GM12878 (cell line): ENCODE measurements at regions of chr9 and their contacts with region 1.

Region 1: DNA sequence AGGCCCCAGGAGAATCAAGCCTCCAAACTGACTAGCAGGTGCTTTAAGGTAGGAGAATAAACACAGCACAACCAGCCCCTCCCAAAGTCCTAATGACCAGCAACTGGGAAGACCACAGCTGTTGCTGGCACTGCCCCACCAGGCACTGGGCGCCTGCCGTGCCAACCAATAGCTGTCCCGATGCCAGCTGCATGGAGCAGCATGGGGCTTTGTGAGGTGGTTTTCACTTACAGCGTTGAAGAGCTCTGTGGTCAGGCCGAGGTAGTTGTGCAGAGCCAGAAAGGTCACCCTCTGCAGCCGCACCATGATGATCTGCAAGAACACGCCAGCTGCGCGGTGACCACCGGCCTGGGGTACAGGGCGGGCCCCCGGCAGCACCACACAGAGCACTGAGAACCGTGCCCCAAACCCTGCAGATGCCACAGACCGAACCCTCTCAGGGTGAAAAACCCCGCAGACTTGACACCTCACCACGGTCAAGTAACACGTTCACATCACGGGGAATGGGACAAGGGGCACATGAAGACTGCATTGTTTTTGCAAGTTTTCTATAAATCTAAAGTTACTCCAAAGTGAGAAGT is 28.7 kb downstream of the PNPLA7 start:
- DNase-seq: no peak
- ATAC-seq: no peak
- H3K4me3 ChIP-seq: no peak overlapping the region
- H3K27ac ChIP-seq: no peak overlapping the region
- H3K4me1 ChIP-seq: no peaks in the 10 kb centered on the region
- H3K27me3 ChIP-seq: no peaks in the 10 kb centered on the region
- CTCF ChIP-seq: no peak
- EP300 ChIP-seq: no peak
- POLR2A ChIP-seq: no peak
- RAD21 ChIP-seq: no peak

Region 2: DNA sequence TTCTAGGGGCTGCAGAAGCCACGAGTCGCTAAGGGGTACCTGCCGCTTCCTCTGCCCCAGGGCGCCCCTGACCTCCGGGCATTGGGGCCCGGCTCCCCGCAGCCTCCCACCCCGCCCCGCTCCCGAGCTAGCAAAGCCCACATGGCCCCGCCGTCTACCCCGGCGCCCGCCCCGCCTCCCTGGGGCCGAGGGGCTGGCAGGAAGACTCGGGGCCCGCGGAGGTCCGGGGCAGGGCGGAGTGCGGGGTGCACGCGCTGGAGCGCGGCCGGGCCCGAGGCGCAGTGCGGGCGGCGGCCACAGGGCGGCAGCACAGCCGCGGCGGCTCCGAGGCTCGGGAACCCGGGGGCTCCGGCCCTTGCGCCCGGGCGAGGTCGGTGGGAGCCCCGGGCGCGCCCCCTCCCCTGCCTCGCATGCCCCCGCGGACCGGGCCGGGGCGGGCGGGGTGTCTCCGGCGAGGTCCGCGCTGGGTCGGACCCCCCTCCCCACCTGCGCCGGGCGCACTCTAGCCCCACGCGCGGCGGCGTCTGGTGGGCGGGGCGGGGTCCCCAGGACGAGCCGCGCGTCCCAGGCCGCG is 226.2 kb before region 1 on chr9:
- CTCF ChIA-PET with region 1: no interaction called
- POLR2A ChIA-PET with region 1: no interaction called
- RAD21 ChIA-PET with region 1: no interaction called
- SMC1A ChIA-PET with region 1: no interaction called
- in situ Hi-C with region 1: loop called (anchors 5 kb)
- intact Hi-C with region 1: loop called (anchors 10 kb)
- DNase-seq: no peak
- ATAC-seq: peak; percentile 87
- H3K4me3 ChIP-seq: peak overlapping the region; percentile 36; the same call in 1 of the 2 replicates
- H3K27ac ChIP-seq: no peak overlapping the region
- H3K4me1 ChIP-seq: peaks cover 11% of the 10 kb centered on the region
- H3K27me3 ChIP-seq: no peaks in the 10 kb centered on the region; a peak in 1 of 4 replicates
- CTCF ChIP-seq: peak; percentile 50 to 69 (median 53); a peak in 5 of 6 replicates
- EP300 ChIP-seq: no peak
- POLR2A ChIP-seq: no peak
- RAD21 ChIP-seq: peak; percentile 60

Region 3: DNA sequence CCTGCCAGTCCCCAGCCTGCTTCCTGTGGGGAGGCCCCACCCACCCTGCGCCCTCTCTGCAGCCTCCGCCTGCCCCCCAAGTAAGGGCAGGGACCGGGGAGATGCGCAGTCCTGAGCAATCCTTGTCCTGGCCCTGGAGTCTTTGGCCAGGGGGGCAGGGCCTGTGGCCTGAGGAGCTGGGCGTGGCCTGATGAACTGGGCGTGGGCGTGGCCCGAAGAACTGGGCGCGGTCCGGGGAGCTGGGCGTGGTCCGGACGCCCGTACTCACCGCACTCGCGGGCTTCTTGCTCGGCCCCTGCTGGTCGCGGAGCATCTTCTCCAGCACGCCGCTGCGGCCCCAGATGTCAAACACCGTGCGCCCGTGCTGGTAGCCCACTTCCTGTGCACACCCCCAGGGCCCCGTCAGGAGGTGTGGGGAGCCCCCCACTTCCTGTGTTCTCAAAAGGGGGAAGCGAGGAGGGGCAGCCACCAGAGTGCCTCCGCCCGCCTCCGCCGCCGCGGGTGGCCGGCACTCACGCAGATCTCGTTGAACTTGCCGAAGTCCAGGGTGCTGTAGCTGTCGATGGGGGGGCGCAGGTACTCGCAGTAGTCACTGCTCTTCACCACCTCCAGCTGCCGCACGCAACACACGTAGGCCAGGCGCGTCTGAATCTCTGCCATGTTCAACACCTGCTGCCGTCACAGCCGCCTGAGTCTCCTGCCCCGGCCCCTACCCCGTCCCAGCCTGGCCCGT is 59.7 kb before region 1 on chr9:
- CTCF ChIA-PET with region 1: no interaction called
- POLR2A ChIA-PET with region 1: no interaction called
- RAD21 ChIA-PET with region 1: no interaction called
- SMC1A ChIA-PET with region 1: no interaction called
- in situ Hi-C with region 1: no loop called
- intact Hi-C with region 1: loop called (anchors 10 kb)
- DNase-seq: peak; percentile 49
- ATAC-seq: peak; percentile 80
- H3K4me3 ChIP-seq: peak overlapping the region; percentile 36; the same call in 1 of the 2 replicates
- H3K27ac ChIP-seq: peak overlapping the region; percentile 22; the same call in 1 of the 2 replicates
- H3K4me1 ChIP-seq: peaks cover 26% of the 10 kb centered on the region
- H3K27me3 ChIP-seq: no peaks in the 10 kb centered on the region
- CTCF ChIP-seq: peak in 2 of 3 experiments; percentile 11 to 35; a peak in 4 of 6 replicates
- EP300 ChIP-seq: 0 out of 4 replicates have a peak, but pooled peaks of 1 of the 2 experiments have one; percentile 17
- POLR2A ChIP-seq: no peak
- RAD21 ChIP-seq: no peak

Region 4: GRCh38 chr9:138022121-138022741 is 500.7 kb after region 1 on chr9:
- CTCF ChIA-PET with region 1: no interaction called
- POLR2A ChIA-PET with region 1: no interaction called
- RAD21 ChIA-PET with region 1: no interaction called
- SMC1A ChIA-PET with region 1: no interaction called
- in situ Hi-C with region 1: no loop called
- intact Hi-C with region 1: no loop called
- DNase-seq: no peak
- ATAC-seq: peak; percentile 60
- H3K4me3 ChIP-seq: no peak overlapping the region
- H3K27ac ChIP-seq: no peak overlapping the region
- H3K4me1 ChIP-seq: no peaks in the 10 kb centered on the region
- H3K27me3 ChIP-seq: peaks cover 2 to 6% of the 10 kb centered on the region in 2 experiments; a peak in 3 of 4 replicates
- CTCF ChIP-seq: peak; percentile 27 to 36 (median 33); a peak in 4 of 6 replicates
- EP300 ChIP-seq: no peak
- POLR2A ChIP-seq: no peak
- RAD21 ChIP-seq: 0 out of 2 replicates have a peak, but pooled peaks have one; percentile 18